Endothelial cell of umbilical vein (primary cell): ENCODE measurements at regions of chr1 and their contacts with region 1.

Region 1: GRCh38 chr1:23184212-23184934 is 15.7 kb upstream of the LUZP1 start:
- DNase-seq: peak; percentile 60
- H3K4me3 ChIP-seq: peak overlapping the region in 1 of 3 experiments; percentile 19
- H3K27ac ChIP-seq: no peak overlapping the region
- H3K4me1 ChIP-seq: peaks cover 10% of the 10 kb centered on the region
- H3K27me3 ChIP-seq: no peaks in the 10 kb centered on the region
- CTCF ChIP-seq: peak; percentile 43 to 48
- POLR2A ChIP-seq: no peak

Region 2: DNA sequence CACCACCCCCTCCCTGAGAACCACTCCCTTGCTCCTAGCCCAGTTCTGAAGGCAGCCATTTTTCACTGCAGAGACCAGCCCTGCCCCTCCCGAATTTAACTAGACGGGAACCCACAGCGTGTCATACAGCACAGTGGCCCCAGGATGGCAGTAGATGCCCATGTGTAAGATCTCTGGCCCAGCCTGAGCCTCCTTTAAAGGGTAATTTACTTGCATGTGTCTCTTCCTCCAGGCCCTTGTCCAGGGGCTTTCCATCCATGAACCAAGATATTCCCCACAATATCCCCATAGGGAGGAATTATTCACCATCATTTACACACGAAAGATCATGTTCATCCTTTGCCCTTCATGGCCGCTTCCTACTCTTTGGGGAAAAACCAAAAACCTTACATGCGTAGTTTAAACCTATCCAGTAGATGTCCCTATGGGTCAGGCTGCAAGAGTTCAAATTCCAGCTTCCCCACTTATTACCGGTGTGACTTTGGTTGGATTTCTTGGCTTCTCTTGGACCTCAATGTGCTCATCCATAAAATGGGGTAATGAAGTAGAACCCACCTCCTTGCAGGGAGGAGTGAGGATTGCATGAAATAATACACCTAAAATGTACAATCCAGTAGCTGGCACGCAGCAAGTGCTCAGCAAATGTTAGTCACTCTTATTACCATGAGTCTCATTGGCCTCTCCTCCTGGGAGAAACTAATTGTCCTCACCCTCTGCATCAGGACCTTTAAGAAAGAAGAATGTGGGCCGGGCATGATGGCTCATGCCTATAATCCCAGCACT is 207.7 kb before region 1 on chr1:
- CTCF ChIA-PET with region 1: interaction called, 58 read pairs
- POLR2A ChIA-PET with region 1: no interaction called
- dilution Hi-C with region 1: no loop called
- intact Hi-C with region 1: loop called (anchors 1 kb)
- DNase-seq: peak; percentile 83
- H3K4me3 ChIP-seq: no peak overlapping the region
- H3K27ac ChIP-seq: no peak overlapping the region
- H3K4me1 ChIP-seq: peaks cover 12% of the 10 kb centered on the region
- H3K27me3 ChIP-seq: no peaks in the 10 kb centered on the region
- CTCF ChIP-seq: peak; percentile 81 to 87
- POLR2A ChIP-seq: no peak

Region 3: DNA sequence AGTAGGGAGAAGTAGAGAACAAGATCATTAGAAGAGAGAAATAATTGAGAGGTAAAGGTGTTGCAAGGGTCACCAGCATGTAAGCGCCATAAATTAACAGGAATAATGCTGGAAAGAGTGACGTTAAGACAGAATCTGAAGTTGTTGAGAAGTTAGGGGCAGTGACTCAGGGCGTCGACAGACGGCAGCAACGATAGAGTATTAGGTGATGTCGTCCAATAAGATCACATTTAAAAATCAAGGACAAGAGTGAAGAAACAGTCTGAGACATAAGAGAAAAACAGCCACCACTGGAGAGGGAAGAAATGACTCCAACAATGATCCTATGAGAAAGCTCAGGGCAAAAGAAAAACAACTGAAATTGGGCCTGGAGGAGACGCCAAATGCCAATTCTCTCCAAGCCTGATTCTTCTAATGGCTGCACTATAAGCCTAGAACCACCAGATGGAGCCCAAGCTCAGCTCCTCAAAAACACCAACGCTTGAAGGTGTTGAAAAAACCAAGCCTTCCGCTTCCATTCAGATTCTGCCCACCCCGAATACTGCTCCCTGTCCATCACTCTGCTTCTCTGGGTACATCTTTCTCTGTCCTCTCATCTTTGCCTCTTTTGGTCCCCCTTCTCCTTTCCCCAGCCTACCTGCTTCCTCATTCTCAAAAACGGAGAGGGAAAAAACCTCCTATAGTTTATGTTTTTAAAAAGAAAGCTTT is 85.8 kb before region 1 on chr1:
- CTCF ChIA-PET with region 1: interaction called, 671 read pairs
- POLR2A ChIA-PET with region 1: interaction called, 3 read pairs
- dilution Hi-C with region 1: loop called (anchors 10 kb)
- intact Hi-C with region 1: loop called (anchors 1 kb)
- DNase-seq: peak; percentile 78
- H3K4me3 ChIP-seq: no peak overlapping the region
- H3K27ac ChIP-seq: peak overlapping the region; percentile 83
- H3K4me1 ChIP-seq: peaks cover 53% of the 10 kb centered on the region
- H3K27me3 ChIP-seq: no peaks in the 10 kb centered on the region
- CTCF ChIP-seq: peak; percentile 90 to 93
- POLR2A ChIP-seq: no peak

Region 4: GRCh38 chr1:23122023-23122748 is 62.2 kb before region 1 on chr1:
- CTCF ChIA-PET with region 1: interaction called, 21 read pairs
- POLR2A ChIA-PET with region 1: no interaction called
- dilution Hi-C with region 1: no loop called
- intact Hi-C with region 1: no loop called
- DNase-seq: peak; percentile 60
- H3K4me3 ChIP-seq: no peak overlapping the region
- H3K27ac ChIP-seq: no peak overlapping the region
- H3K4me1 ChIP-seq: peaks cover 43% of the 10 kb centered on the region
- H3K27me3 ChIP-seq: no peaks in the 10 kb centered on the region
- CTCF ChIP-seq: no peak
- POLR2A ChIP-seq: no peak

Region 5: DNA sequence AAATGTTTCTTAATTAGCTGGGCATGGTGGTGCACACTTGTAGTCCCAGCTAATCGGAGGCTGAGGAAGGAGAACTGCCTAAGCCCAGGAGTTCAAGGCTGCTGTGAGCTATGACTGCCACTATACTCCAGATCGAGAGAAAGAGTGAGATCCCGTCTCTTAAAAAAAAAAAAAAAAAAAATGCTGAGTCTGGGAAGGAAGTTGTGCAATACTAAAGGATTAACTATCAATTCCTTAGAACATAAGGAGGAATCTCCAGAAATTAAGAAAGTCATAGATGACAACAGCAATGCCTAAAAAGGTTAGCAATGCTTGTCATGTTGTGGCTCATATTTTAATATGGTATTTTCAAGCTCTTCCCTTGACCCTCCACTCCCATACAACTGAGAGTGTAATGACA is 21.0 kb before region 1 on chr1:
- CTCF ChIA-PET with region 1: interaction called, 129 read pairs
- POLR2A ChIA-PET with region 1: interaction called, 12 read pairs
- dilution Hi-C with region 1: no loop called
- intact Hi-C with region 1: no loop called
- DNase-seq: no peak
- H3K4me3 ChIP-seq: no peak overlapping the region
- H3K27ac ChIP-seq: no peak overlapping the region
- H3K4me1 ChIP-seq: peaks cover 21% of the 10 kb centered on the region
- H3K27me3 ChIP-seq: no peaks in the 10 kb centered on the region
- CTCF ChIP-seq: no peak
- POLR2A ChIP-seq: no peak

Region 6: DNA sequence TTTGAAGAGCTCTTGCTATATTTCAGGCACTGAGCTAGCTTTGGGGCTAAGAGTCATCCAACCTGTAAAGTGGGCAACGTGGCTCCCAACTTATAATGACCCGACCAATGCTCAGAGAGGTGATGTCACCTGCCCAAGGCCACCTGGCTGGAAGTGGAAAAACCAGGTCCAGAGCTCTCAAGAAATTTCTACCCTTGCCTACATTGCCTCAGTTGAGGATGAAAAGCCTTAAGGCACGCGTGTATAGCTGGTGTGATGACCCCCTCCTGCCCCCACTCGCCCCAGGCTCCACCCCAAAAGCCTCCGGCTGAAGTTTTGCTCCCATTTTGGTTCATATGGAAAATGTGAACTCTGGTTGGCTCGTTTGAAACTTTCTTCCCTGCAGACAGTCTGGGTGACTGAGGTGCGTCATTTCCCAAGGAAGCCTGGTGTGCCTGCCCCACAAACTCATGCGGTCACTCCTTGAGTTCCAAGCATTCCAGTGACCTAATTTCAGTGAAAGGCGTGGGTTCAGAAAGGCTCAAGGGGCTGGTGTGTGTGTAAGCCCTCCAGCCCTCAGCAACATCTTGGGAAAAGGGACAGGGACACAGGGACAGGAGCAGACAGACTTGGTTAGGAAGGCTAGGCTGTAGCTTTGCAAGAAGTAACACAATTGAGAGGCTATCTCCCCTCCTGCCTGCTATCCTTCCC is 12.4 kb after region 1 on chr1:
- CTCF ChIA-PET with region 1: interaction called, 62 read pairs
- POLR2A ChIA-PET with region 1: interaction called, 4 read pairs
- dilution Hi-C with region 1: no loop called
- intact Hi-C with region 1: loop called (anchors 1 kb)
- DNase-seq: peak; percentile 84
- H3K4me3 ChIP-seq: no peak overlapping the region
- H3K27ac ChIP-seq: peak overlapping the region; percentile 94
- H3K4me1 ChIP-seq: peaks cover 27% of the 10 kb centered on the region
- H3K27me3 ChIP-seq: no peaks in the 10 kb centered on the region
- CTCF ChIP-seq: no peak
- POLR2A ChIP-seq: peak; percentile 61

Region 7: GRCh38 chr1:23224714-23225648 is 40.6 kb after region 1 on chr1:
- CTCF ChIA-PET with region 1: interaction called, 10 read pairs
- POLR2A ChIA-PET with region 1: no interaction called
- dilution Hi-C with region 1: no loop called
- intact Hi-C with region 1: no loop called
- DNase-seq: peak; percentile 78
- H3K4me3 ChIP-seq: no peak overlapping the region
- H3K27ac ChIP-seq: peak overlapping the region; percentile 46
- H3K4me1 ChIP-seq: peaks cover 17% of the 10 kb centered on the region
- H3K27me3 ChIP-seq: no peaks in the 10 kb centered on the region
- CTCF ChIP-seq: no peak
- POLR2A ChIP-seq: no peak